Pancreas (tissue), 10 donors: ENCODE measurements at regions of chr13 and their contacts with region 1.

Region 1: GRCh38 chr13:49840266-49840665 is 47.8 kb upstream of the KPNA3 start:
- DNase-seq: no peak
- ATAC-seq: peak in 1 of 4 donors; percentile 17
- H3K4me3 ChIP-seq: no peak overlapping the region
- H3K27ac ChIP-seq: no peak overlapping the region
- H3K4me1 ChIP-seq: no peaks in the 10 kb centered on the region
- H3K27me3 ChIP-seq: no peaks in the 10 kb centered on the region
- CTCF ChIP-seq: no peak

Region 2: GRCh38 chr13:49652355-49653305 is 187.6 kb before region 1 on chr13:
- intact Hi-C with region 1: loop called in 1 of 3 experiments (anchors 10 kb)
- DNase-seq: peak in 2 of 6 donors; percentile 9 to 37
- ATAC-seq: peak; percentile 69 to 91 (median 84)
- H3K4me3 ChIP-seq: no peak overlapping the region
- H3K27ac ChIP-seq: no peak overlapping the region
- H3K4me1 ChIP-seq: no peaks in the 10 kb centered on the region
- H3K27me3 ChIP-seq: no peaks in the 10 kb centered on the region
- CTCF ChIP-seq: peak in 3 of 4 donors; percentile 24 to 44 (median 30)

Region 3: GRCh38 chr13:49669735-49670309 is 170.4 kb before region 1 on chr13:
- intact Hi-C with region 1: loop called in 1 of 3 experiments (anchors 5 kb)
- DNase-seq: peak in 3 of 6 donors; percentile 32 to 57 (median 38)
- ATAC-seq: peak; percentile 94 to 99 (median 98)
- H3K4me3 ChIP-seq: no peak overlapping the region
- H3K27ac ChIP-seq: no peak overlapping the region
- H3K4me1 ChIP-seq: no peaks in the 10 kb centered on the region
- H3K27me3 ChIP-seq: no peaks in the 10 kb centered on the region
- CTCF ChIP-seq: peak in 3 of 4 donors; percentile 22 to 49 (median 29)

Region 4: DNA sequence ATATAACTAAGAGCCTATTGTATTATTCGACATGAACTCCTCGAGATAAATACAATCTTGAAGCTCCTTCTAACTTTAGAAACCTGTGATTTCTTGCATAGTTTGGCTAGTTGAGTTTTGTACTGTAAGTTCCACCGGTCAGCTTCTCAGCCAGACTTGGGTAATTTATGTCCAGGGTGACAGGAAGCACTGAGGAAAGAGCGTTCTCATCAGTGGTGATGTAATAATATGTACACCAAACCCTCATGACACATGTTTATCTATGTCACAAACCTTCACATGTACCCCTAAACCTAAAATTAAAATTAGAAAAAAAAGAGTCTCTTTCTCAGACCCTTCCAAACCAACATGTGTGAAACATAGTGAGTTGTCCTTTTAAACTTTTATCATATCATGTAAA is 380.7 kb after region 1 on chr13:
- intact Hi-C with region 1: no loop called
- DNase-seq: no peak
- ATAC-seq: no peak
- H3K4me3 ChIP-seq: no peak overlapping the region
- H3K27ac ChIP-seq: no peak overlapping the region
- H3K4me1 ChIP-seq: peaks cover 3 to 12% (median 8%) of the 10 kb centered on the region in 3 donors
- H3K27me3 ChIP-seq: no peaks in the 10 kb centered on the region
- CTCF ChIP-seq: no peak